WTC11 (cell line): ENCODE measurements at regions of chr6 and their contacts with region 1.

Region 1: GRCh38 chr6:53348371-53349208 is at the start of gene ELOVL5:
- DNase-seq: peak; percentile 95
- ATAC-seq: peak; percentile 73
- H3K4me3 Mint-ChIP-seq: peak within 1 kb of the TSS; percentile 90
- H3K27ac Mint-ChIP-seq: peak within 1 kb of the TSS; percentile 89
- H3K4me1 Mint-ChIP-seq: peaks cover 41% of the 10 kb centered on the region
- H3K27me3 Mint-ChIP-seq: peaks cover 28% of the 10 kb centered on the region
- CTCF ChIP-seq: no peak
- total RNA-seq, gene ELOVL5: 122 to 139 TPM (median 137 TPM) in 3 replicates

Region 2: GRCh38 chr6:53359072-53359842 is 10.7 kb after region 1 on chr6:
- CTCF ChIA-PET with region 1: interaction called, 6 read pairs
- POLR2A ChIA-PET with region 1: interaction called, 11 read pairs
- DNase-seq: peak; percentile 96
- ATAC-seq: peak; percentile 94
- H3K4me3 Mint-ChIP-seq: peak overlapping the region; percentile 81
- H3K27ac Mint-ChIP-seq: peak overlapping the region; percentile 98
- H3K4me1 Mint-ChIP-seq: peaks cover 31% of the 10 kb centered on the region
- H3K27me3 Mint-ChIP-seq: peaks cover 17% of the 10 kb centered on the region
- CTCF ChIP-seq: no peak

Region 3: GRCh38 chr6:53461041-53461656 is 112.6 kb after region 1 on chr6:
- CTCF ChIA-PET with region 1: no interaction called
- POLR2A ChIA-PET with region 1: no interaction called
- DNase-seq: no peak
- ATAC-seq: no peak
- H3K4me3 Mint-ChIP-seq: no peak overlapping the region
- H3K27ac Mint-ChIP-seq: no peak overlapping the region
- H3K4me1 Mint-ChIP-seq: peaks cover 10% of the 10 kb centered on the region
- H3K27me3 Mint-ChIP-seq: no peaks in the 10 kb centered on the region
- CTCF ChIP-seq: no peak